RWPE1 (cell line): ENCODE measurements at regions of chr1 and their contacts with region 1.

Region 1: DNA sequence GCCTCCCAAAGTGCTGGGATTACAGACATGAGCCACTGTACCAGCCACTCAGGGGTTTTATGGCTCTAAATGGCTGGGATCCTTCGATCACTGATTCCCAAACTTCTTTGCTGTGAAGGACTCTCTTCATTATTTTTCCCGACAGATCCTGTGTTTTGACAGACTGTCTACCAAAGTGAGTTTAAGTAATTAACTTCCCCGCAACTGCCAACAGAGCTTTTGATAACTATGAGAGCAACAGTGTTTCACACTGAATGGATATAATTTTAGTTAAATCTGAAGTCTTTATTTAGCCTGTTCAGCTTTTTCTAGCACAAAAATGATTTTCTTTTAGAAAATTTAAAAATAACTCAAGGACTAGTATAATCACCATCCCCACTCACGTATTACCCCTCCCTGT is 12.6 kb upstream of the RABIF start:
- DNase-seq: no peak
- H3K27ac ChIP-seq: no peak overlapping the region
- CTCF ChIP-seq: no peak

Region 2: GRCh38 chr1:202919615-202920014 is 18.1 kb after region 1 on chr1:
- CTCF ChIA-PET with region 1: interaction called, 4 read pairs
- POLR2A ChIA-PET with region 1: interaction called, 11 read pairs
- DNase-seq: no peak
- H3K27ac ChIP-seq: no peak overlapping the region
- CTCF ChIP-seq: no peak